Heart right ventricle (tissue), 16 donors: ENCODE measurements at regions of chr7 and their contacts with region 1.

Region 1: GRCh38 chr7:45217358-45217757 is 59.8 kb downstream of the RAMP3 start:
- DNase-seq: no peak
- ATAC-seq: peak in 4 of 8 donors; percentile 21 to 56 (median 40)
- H3K4me3 ChIP-seq: no peak overlapping the region
- H3K27ac ChIP-seq: no peak overlapping the region
- H3K4me1 ChIP-seq: no peaks in the 10 kb centered on the region
- H3K27me3 ChIP-seq: peaks cover 0 to 29% (median 12%) of the 10 kb centered on the region in 7 donors
- CTCF ChIP-seq: peak in 7 of 9 donors; percentile 11 to 60 (median 37)

Region 2: DNA sequence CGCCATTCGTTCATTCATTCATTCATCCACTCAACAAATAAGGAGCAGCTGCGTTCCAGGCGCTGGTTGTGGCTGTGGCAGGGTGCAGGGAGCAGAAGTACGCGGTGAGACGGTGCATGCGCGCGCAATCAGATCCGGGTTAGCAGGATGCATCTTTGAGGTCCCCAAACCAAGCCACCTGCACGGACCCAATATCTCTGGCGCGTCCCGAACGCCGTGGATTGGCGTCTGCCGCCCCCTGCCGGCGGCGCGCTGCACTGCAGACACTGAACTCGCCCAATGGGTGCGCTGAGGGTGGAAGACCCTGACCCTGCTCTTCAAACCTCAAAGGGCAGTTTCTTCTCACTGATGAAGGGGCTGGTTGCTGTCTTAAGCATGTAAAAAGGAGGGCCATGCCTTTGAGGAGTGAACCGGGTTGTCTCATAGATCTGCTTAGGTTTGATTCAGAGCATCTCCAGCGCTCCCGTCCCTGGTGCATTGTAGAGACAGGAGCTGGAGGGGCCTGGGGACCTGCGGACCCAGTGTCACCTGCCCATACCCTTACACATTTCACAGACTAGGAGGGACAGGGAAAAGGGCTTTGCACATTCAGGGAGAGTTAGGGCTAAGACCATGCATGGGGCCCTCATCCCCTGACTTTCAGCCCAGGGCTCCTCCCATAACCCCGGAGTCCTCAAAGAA is 42.7 kb after region 1 on chr7:
- intact Hi-C with region 1: loop called in 1 of 10 experiments (anchors 5 kb)
- DNase-seq: peak; percentile 43 to 71
- ATAC-seq: peak; percentile 56 to 95 (median 82)
- H3K4me3 ChIP-seq: peak overlapping the region in 1 of 10 donors; percentile 17
- H3K27ac ChIP-seq: no peak overlapping the region
- H3K4me1 ChIP-seq: peaks cover 0 to 15% (median 0%) of the 10 kb centered on the region in 9 donors
- H3K27me3 ChIP-seq: peaks cover 0 to 25% (median 0%) of the 10 kb centered on the region in 7 donors
- CTCF ChIP-seq: peak; percentile 95 to 99 (median 98)

Region 3: DNA sequence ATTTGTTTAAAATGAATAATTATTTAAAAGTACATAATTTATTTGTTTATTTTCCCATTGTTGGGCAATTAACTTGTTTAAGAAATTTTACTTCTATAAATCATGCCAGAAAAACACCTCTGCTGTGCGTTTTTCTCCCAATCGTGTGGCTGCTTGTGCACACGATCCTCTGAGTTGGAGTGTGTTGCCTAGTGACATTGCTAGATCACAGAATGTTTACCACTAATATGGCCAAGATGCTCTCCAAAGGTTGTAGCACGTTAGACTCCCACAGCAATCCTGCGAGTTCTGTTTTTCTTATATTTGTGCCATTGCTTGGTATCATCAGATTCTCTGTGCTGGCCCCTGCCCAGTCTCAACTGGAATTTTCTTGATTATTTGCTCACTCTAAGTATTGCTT is 149.7 kb after region 1 on chr7:
- intact Hi-C with region 1: loop called in 1 of 10 experiments (anchors 5 kb)
- DNase-seq: no peak
- ATAC-seq: no peak
- H3K4me3 ChIP-seq: no peak overlapping the region
- H3K27ac ChIP-seq: no peak overlapping the region
- H3K4me1 ChIP-seq: no peaks in the 10 kb centered on the region
- H3K27me3 ChIP-seq: no peaks in the 10 kb centered on the region
- CTCF ChIP-seq: no peak